ENCODE measurements at regions of chr11 and their contacts with region 1.

Region 1: GRCh38 chr11:128039140-128040021 is 548.0 kb downstream of the ETS1 start:
- DNase-seq: peak; percentile 85

Region 2: GRCh38 chr11:127996825-127997224 is 42.6 kb before region 1 on chr11:
- intact Hi-C with region 1: no loop called
- DNase-seq: no peak

Region 3: DNA sequence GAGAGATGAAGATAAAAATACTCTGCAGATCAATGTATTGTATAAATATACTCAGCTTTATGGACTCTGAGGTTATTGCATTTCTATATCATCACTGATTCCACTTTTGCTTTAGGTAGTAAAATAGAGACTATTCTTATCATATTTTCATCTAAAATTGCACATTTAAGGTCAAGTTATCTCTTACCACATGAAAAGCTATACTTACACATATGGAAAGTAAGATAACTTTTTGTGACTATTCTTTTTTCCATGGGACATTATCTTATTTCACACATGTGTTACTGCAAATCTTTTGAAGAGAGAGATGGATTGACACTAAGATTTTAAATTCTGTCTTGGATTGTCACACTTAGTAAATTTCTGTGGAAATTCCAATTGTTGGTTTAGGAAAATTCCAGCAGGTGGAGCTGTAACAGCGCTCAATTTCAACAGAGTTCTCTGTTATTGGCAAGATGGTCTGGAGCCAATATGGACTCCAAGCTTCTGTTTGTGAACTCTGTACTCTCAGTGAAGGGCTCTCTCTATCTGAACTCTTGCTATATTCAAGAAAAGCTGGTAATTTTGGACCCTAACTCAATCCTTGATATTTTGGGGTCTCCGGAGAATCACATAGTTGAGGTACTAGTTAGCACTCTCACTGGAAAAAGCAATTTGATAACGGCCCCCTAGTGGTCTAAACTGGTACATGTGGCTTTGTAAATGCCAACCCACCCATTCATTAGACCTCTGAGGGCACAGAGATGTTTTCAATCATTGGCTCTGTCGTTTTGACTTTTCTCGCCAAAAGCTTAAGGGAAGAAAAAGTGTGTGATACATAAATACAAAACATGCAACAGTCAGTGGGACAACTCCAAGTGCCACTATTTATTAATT is 118.3 kb after region 1 on chr11:
- intact Hi-C with region 1: loop called (anchors 5 kb)
- DNase-seq: no peak

Region 4: DNA sequence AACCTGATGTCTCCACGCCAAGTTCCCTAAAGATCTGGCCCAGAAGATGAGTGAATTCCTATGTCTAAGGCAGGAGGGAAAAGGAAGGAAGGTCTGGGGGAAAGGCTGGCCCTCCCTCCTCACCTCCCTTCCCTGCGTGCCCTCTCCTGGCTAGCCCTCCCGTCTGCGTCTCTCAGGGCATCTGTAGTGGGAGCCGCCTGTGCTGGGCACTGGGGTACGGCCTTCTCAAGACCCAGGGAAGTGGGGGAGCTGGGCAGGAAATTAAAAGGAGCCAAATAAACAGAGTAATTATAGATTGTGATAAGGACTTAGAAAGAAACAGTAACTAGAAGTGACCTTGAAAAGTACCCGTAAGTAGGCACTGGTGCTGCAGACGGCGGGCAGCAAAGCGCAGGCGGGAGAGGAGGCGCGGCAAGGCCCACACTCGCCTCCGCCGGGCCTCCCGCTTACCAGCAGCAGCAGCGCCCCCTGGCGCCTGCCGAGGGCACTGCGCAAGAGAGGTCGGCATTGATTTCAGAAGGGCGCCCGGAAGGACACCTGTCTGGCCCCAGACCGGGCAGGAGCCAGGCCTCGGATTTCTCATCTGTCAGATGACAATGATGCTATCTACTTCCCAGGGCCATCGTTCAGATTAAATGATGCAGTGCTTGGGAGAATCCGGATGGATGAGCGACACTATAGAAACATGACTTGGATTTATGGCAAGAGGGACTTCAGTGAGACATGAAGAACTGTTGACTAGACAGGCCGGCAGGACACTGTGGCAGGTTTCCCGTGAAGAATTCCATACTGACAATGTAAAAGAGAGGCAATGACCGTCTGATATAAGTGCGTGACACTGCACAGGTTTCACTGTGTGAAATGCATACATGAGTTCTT is 820.4 kb after region 1 on chr11:
- intact Hi-C with region 1: loop called (anchors 10 kb)
- DNase-seq: peak; percentile 87

Measured in cardiac septum (tissue), 1 donor.